ENCODE measurements at regions of chr12 and their contacts with region 1.

Region 1: DNA sequence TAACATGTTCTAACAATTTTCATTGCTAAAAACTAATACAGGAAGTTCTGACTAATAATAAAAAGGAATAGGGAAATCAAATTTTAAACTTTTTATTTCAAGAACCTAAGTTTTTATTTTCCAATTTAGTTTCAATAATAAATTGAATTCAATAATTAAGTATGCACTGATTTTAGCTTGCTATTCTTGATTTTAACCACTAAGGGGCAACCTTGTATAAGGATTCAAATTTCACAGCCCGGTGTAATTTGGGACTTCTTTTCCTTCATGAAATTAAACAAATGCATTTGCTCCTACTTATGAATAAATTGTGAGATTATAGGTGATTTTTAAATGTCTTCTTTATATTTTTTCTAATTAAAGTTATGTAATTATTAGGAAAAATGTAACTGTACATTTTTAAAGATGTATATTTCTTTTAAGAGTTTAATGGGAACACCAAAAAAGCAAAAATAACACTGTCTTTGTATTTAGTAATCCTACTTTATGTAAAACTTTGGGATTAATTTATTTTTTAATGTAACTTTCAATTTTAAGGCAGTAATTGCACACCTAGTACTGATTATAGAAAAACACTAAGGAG is 241.4 kb upstream of the PDZRN4 start:
- DNase-seq: no peak
- ATAC-seq: no peak
- H3K4me3 Mint-ChIP-seq: no peak overlapping the region
- H3K27ac Mint-ChIP-seq: no peak overlapping the region
- H3K4me1 Mint-ChIP-seq: no peaks in the 10 kb centered on the region
- H3K27me3 Mint-ChIP-seq: peaks cover 7% of the 10 kb centered on the region

Region 2: GRCh38 chr12:41089438-41089837 is 142.7 kb after region 1 on chr12:
- CTCF ChIA-PET with region 1: no interaction called
- POLR2A ChIA-PET with region 1: no interaction called
- intact Hi-C with region 1: no loop called
- DNase-seq: no peak
- ATAC-seq: no peak
- H3K4me3 Mint-ChIP-seq: no peak overlapping the region
- H3K27ac Mint-ChIP-seq: no peak overlapping the region
- H3K4me1 Mint-ChIP-seq: no peaks in the 10 kb centered on the region
- H3K27me3 Mint-ChIP-seq: no peaks in the 10 kb centered on the region

Region 3: GRCh38 chr12:41264281-41264680 is 317.6 kb after region 1 on chr12:
- CTCF ChIA-PET with region 1: no interaction called
- POLR2A ChIA-PET with region 1: no interaction called
- intact Hi-C with region 1: loop called in 1 of 2 experiments (anchors 10 kb)
- DNase-seq: no peak
- ATAC-seq: no peak
- H3K4me3 Mint-ChIP-seq: no peak overlapping the region
- H3K27ac Mint-ChIP-seq: no peak overlapping the region
- H3K4me1 Mint-ChIP-seq: no peaks in the 10 kb centered on the region
- H3K27me3 Mint-ChIP-seq: peaks cover 3% of the 10 kb centered on the region

Region 4: GRCh38 chr12:42568952-42569915 is 1622.5 kb after region 1 on chr12:
- CTCF ChIA-PET with region 1: no interaction called
- POLR2A ChIA-PET with region 1: no interaction called
- intact Hi-C with region 1: loop called in 1 of 2 experiments (anchors 5 kb)
- DNase-seq: no peak
- ATAC-seq: no peak
- H3K4me3 Mint-ChIP-seq: no peak overlapping the region
- H3K27ac Mint-ChIP-seq: no peak overlapping the region
- H3K4me1 Mint-ChIP-seq: no peaks in the 10 kb centered on the region
- H3K27me3 Mint-ChIP-seq: peaks cover 10% of the 10 kb centered on the region

Measured in activated CD4-positive, alpha-beta T cell treated with anti-CD3 and anti-CD28 coated beads for 36 hours (primary cell).